ENCODE measurements at regions of chr2 and their contacts with region 1.

Region 1: GRCh38 chr2:72993147-72993932 is 76.0 kb downstream of the EMX1 start:
- DNase-seq: no peak
- H3K4me3 ChIP-seq: no peak overlapping the region
- H3K27ac ChIP-seq: no peak overlapping the region
- H3K4me1 ChIP-seq: no peaks in the 10 kb centered on the region
- H3K27me3 ChIP-seq: no peaks in the 10 kb centered on the region
- CTCF ChIP-seq: peak; percentile 70 to 73

Region 2: DNA sequence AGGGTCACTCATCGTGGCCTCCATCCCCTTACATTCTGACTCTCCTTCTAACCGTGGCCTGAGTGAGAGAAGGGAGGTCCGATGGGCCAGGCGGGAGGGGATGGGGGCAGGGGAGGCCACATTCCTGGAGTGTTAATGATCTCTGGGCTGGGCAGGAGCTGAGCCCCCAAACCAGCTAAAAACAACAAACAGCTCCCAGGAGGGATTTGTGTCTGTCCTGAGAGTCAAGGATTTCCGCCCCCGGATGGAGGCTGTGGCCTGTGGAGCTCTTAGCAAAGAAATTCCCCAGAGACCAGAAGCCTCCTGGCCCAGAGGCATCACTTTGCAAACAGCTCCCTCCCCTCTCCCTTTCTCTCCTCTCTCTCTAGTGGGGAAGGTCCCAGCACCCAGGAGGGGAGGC is 52.6 kb before region 1 on chr2:
- CTCF ChIA-PET with region 1: no interaction called
- dilution Hi-C with region 1: no loop called
- in situ Hi-C with region 1: no loop called
- intact Hi-C with region 1: no loop called
- DNase-seq: no peak
- H3K4me3 ChIP-seq: no peak overlapping the region
- H3K27ac ChIP-seq: no peak overlapping the region
- H3K4me1 ChIP-seq: no peaks in the 10 kb centered on the region
- H3K27me3 ChIP-seq: no peaks in the 10 kb centered on the region
- CTCF ChIP-seq: no peak

Region 3: DNA sequence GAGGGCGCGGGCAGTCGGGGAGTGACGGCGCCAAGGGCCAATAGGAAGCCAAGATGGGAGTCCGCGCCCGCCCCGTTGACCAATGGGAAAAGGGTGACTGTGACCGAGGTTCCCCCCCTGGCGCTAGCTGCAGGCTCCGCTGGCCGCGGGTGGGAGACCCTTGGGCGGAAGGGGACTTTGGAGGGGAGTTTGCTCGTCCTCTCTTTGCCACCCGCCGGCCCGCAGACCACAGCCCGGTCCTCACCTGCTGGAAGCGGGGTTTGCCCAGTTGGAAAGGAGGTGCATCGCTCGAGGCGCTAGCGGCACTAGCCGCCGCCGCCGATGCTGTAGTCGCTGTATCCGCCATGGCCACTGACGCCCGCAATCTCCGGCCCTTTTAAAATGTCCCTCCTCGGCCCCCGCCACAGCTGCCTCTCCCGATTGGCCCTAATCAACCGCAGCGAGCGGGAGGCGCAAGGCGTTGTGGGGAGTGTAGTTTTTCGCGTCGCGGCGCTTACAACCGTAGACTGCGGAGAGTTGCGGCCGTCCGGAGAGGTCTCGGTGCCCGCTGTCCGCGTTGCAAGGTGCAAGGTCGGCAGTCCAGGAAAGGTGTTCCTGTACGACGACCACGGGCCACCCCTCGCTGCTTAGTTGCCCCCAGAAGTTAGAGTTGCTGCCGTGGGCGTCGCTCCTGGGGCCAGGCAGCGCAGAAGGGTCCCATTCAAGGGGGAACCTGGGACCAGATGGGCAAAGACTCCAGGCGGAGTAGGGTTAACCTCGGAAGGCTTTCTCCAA is 78.2 kb after region 1 on chr2 and contains the start of gene SFXN5:
- CTCF ChIA-PET with region 1: no interaction called
- dilution Hi-C with region 1: no loop called
- in situ Hi-C with region 1: no loop called
- intact Hi-C with region 1: loop called (anchors 1 kb)
- DNase-seq: peak; percentile 93
- H3K4me3 ChIP-seq: peak within 1 kb of the TSS; percentile 59 to 91 (median 86)
- H3K27ac ChIP-seq: peak within 1 kb of the TSS; percentile 72
- H3K4me1 ChIP-seq: peaks cover 35% of the 10 kb centered on the region
- H3K27me3 ChIP-seq: no peaks in the 10 kb centered on the region
- CTCF ChIP-seq: peak in 1 of 2 donors; percentile 31
- total RNA-seq, gene SFXN5: 12.0 to 16.8 TPM

Region 4: GRCh38 chr2:73163483-73164367 is 170.4 kb after region 1 on chr2:
- CTCF ChIA-PET with region 1: no interaction called
- dilution Hi-C with region 1: no loop called
- in situ Hi-C with region 1: loop called (anchors 5 to 25 kb)
- intact Hi-C with region 1: loop called (anchors 1 kb)
- DNase-seq: peak; percentile 37
- H3K4me3 ChIP-seq: no peak overlapping the region
- H3K27ac ChIP-seq: no peak overlapping the region
- H3K4me1 ChIP-seq: no peaks in the 10 kb centered on the region
- H3K27me3 ChIP-seq: no peaks in the 10 kb centered on the region
- CTCF ChIP-seq: peak; percentile 89 to 90

Region 5: GRCh38 chr2:73212448-73213176 is 219.3 kb after region 1 on chr2:
- CTCF ChIA-PET with region 1: no interaction called
- dilution Hi-C with region 1: loop called (anchors 5 kb)
- in situ Hi-C with region 1: no loop called
- intact Hi-C with region 1: loop called (anchors 1 kb)
- DNase-seq: peak; percentile 44
- H3K4me3 ChIP-seq: no peak overlapping the region
- H3K27ac ChIP-seq: no peak overlapping the region
- H3K4me1 ChIP-seq: peaks cover 13% of the 10 kb centered on the region
- H3K27me3 ChIP-seq: no peaks in the 10 kb centered on the region
- CTCF ChIP-seq: peak; percentile 93 to 94

Measured in mammary epithelial cell (primary cell).